SK-N-SH (cell line): ENCODE measurements at regions of chr12 and their contacts with region 1.

Region 1: GRCh38 chr12:5733136-5733755 is 211.8 kb downstream of the ANO2 start:
- DNase-seq: no peak
- H3K4me3 ChIP-seq: no peak overlapping the region
- H3K27ac ChIP-seq: no peak overlapping the region
- H3K4me1 ChIP-seq: no peaks in the 10 kb centered on the region
- H3K27me3 ChIP-seq: peaks cover 44% of the 10 kb centered on the region; the same call in 1 of the 2 replicates
- CTCF ChIP-seq: no peak
- EP300 ChIP-seq: no peak
- RAD21 ChIP-seq: no peak

Region 2: DNA sequence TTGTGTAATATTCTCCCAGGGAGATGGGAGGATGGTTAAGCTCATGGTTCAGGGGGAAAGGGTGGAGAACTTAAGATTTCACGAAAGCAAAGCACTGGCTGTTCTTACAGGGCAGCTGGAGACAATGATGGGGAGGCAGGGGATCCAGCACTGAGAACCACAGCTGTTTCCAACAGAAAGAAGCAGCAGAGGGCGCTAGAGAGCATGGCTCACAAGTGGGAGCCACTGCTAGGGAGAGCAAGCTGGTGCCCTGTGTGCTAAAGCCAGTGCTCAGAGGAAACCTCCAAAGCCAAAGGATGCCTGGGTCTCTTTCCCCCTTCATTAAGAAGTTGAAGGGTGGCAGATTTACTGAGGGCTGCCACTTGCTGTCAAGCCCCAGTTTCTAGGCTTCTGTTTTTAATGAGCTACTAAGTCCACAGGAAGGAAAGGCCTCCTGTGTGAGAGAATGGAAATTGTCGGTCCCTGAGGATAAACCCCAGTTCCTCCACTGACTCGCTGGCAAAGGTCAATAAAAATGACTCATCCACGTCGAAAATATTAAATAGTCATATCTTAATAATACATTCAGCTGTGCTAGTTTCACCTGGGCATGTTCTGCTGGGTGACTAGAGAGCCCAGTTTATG is 12.1 kb after region 1 on chr12:
- CTCF ChIA-PET with region 1: interaction called, 25 read pairs
- POLR2A ChIA-PET with region 1: no interaction called
- DNase-seq: peak; percentile 55
- H3K4me3 ChIP-seq: peak overlapping the region in 1 of 2 experiments; percentile 39; a peak in 1 of 4 replicates
- H3K27ac ChIP-seq: no peak overlapping the region
- H3K4me1 ChIP-seq: no peaks in the 10 kb centered on the region
- H3K27me3 ChIP-seq: peaks cover 33% of the 10 kb centered on the region; the same call in 1 of the 2 replicates
- CTCF ChIP-seq: peak; percentile 72
- EP300 ChIP-seq: no peak
- RAD21 ChIP-seq: peak; percentile 57